CD4-positive, alpha-beta memory T cell (primary cell): ENCODE measurements at regions of chr13 and their contacts with region 1.

Region 1: DNA sequence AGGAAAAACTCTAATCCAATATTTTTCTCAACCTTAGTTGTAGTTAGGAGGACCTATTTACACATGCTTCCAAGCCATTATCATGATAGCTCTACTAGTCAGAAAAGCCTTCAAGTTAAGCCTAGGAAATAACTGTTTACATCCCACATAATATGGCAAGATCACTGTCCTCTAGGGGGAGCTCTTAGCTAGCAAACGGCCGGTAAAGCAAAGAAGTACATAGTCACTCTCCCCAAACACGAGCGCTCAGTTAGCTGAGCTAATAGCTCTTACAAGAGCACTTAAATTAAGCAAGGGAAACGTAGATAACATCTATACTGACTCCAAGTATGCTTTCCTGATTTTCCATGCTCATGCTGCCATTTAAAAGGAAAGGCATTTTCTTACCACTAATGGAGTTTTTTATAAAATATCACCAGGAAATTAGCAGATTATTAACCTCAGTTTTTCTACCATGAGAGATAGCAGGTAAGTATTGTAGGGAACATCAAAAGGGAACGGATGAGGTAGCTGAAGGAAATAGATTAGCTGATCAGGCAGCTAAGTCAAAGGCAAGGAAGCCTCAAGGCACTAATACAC is 100.6 kb upstream of the PABPC3 start:
- DNase-seq: peak; percentile 55 to 66 (median 63)
- H3K4me3 ChIP-seq: no peak overlapping the region
- H3K4me3 Mint-ChIP-seq: no peak overlapping the region
- H3K27ac ChIP-seq: no peak overlapping the region
- H3K27ac Mint-ChIP-seq: no peak overlapping the region
- H3K4me1 ChIP-seq: no peaks in the 10 kb centered on the region
- H3K4me1 Mint-ChIP-seq: peaks cover 0 to 5% (median 5%) of the 10 kb centered on the region in 4 donors
- H3K27me3 ChIP-seq: no peaks in the 10 kb centered on the region
- H3K27me3 Mint-ChIP-seq: peaks cover 6 to 32% of the 10 kb centered on the region in 2 donors

Region 2: DNA sequence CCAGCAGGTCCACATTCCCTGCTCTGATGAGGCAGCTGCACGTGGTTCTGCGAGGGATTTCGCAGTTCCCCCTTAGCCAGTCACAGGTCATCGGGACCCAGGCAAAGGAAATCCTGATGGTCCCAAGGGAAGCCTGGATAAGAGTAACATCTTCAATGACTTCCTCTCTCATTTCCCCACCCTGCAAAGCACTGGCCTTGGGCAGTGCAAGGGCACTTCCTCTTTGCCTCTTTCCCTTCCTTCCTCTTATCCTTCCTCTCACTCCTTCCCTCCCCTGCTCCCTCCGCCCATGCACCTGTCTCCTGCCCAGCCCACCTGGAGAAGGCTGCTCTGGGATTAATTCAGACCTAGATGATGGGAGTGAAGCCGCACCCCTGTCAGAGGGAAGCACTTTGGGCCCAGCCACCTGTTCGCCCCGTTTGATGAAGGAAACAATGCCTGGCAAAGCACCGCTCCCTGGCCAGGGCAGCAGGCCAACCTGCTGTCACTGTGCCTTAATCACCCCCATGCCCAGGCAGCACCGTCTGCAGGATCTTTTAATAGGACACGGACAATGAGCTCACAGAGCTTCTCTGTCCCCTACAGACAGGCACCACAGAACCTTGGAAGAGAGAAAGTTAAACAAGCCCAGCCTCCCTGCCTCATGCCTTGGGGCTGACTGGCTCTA is 12.8 kb before region 1 on chr13:
- CTCF ChIA-PET with region 1: interaction called, 25 read pairs
- POLR2A ChIA-PET with region 1: no interaction called
- intact Hi-C with region 1: no loop called
- DNase-seq: no peak
- H3K4me3 ChIP-seq: no peak overlapping the region
- H3K4me3 Mint-ChIP-seq: no peak overlapping the region
- H3K27ac ChIP-seq: no peak overlapping the region
- H3K27ac Mint-ChIP-seq: no peak overlapping the region
- H3K4me1 ChIP-seq: no peaks in the 10 kb centered on the region
- H3K4me1 Mint-ChIP-seq: no peaks in the 10 kb centered on the region
- H3K27me3 ChIP-seq: no peaks in the 10 kb centered on the region
- H3K27me3 Mint-ChIP-seq: peaks cover 7 to 28% of the 10 kb centered on the region in 2 donors

Region 3: DNA sequence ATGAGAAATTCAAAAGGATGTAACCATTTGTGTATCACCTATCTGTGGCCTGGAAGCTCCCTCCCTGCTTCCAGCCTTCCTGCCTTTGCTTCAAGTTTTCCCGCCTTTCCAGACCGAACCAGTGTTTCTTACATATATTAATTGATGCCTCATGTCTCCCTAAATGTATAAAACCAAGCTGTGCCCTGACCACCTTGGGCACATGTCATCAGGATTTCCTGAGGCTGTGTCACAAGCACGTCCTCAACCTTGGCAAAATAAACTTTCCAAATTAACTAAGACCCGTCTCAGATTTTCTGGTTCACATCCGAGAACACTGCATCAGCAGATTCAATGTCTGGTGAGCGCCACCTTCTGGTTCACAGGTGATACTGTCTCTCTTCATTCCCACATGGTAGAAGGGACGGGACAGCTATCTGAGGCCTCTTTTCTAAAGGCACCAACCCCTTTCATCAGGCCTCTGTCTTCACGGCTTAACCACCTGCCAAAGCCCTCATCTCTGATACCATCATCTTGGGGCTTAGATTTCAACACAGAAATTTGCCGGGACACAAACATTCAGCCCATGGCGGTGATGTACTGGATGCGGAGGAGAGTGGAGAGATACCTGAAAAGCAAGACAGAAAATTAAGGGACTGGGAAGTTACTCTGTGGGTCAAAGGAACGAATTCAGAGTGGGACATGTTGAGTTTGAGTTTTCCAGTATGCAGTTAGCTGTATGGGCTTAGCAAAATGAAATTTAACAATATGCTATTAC is 41.9 kb after region 1 on chr13:
- CTCF ChIA-PET with region 1: interaction called, 12 read pairs
- POLR2A ChIA-PET with region 1: no interaction called
- intact Hi-C with region 1: loop called (anchors 1 kb)
- DNase-seq: peak; percentile 27 to 54 (median 50)
- H3K4me3 ChIP-seq: no peak overlapping the region
- H3K4me3 Mint-ChIP-seq: no peak overlapping the region
- H3K27ac ChIP-seq: no peak overlapping the region
- H3K27ac Mint-ChIP-seq: no peak overlapping the region
- H3K4me1 ChIP-seq: no peaks in the 10 kb centered on the region
- H3K4me1 Mint-ChIP-seq: no peaks in the 10 kb centered on the region
- H3K27me3 ChIP-seq: peaks cover 6% of the 10 kb centered on the region
- H3K27me3 Mint-ChIP-seq: peaks cover 25 to 38% of the 10 kb centered on the region in 2 donors

Region 4: GRCh38 chr13:25114220-25114619 is 118.9 kb after region 1 on chr13:
- CTCF ChIA-PET with region 1: interaction called, 15 read pairs
- POLR2A ChIA-PET with region 1: no interaction called
- intact Hi-C with region 1: no loop called
- DNase-seq: peak; percentile 23 to 43 (median 34)
- H3K4me3 ChIP-seq: no peak overlapping the region
- H3K4me3 Mint-ChIP-seq: no peak overlapping the region
- H3K27ac ChIP-seq: no peak overlapping the region
- H3K27ac Mint-ChIP-seq: no peak overlapping the region
- H3K4me1 ChIP-seq: no peaks in the 10 kb centered on the region
- H3K4me1 Mint-ChIP-seq: no peaks in the 10 kb centered on the region
- H3K27me3 ChIP-seq: peaks cover 5% of the 10 kb centered on the region
- H3K27me3 Mint-ChIP-seq: peaks cover 19 to 23% of the 10 kb centered on the region in 2 donors

Region 5: GRCh38 chr13:25375727-25376358 is 380.5 kb after region 1 on chr13:
- CTCF ChIA-PET with region 1: no interaction called
- POLR2A ChIA-PET with region 1: no interaction called
- intact Hi-C with region 1: loop called (anchors 1 kb)
- DNase-seq: peak; percentile 28 to 51 (median 38)
- H3K4me3 ChIP-seq: no peak overlapping the region
- H3K4me3 Mint-ChIP-seq: peak overlapping the region in 1 of 8 donors; percentile 53
- H3K27ac ChIP-seq: no peak overlapping the region
- H3K27ac Mint-ChIP-seq: no peak overlapping the region
- H3K4me1 ChIP-seq: peaks cover 4% of the 10 kb centered on the region
- H3K4me1 Mint-ChIP-seq: peaks cover 7 to 15% (median 10%) of the 10 kb centered on the region in 4 donors
- H3K27me3 ChIP-seq: peaks cover 15% of the 10 kb centered on the region
- H3K27me3 Mint-ChIP-seq: peaks cover 37 to 44% of the 10 kb centered on the region in 2 donors